PC-3 (cell line): ENCODE measurements at regions of chr3 and their contacts with region 1.

Region 1: DNA sequence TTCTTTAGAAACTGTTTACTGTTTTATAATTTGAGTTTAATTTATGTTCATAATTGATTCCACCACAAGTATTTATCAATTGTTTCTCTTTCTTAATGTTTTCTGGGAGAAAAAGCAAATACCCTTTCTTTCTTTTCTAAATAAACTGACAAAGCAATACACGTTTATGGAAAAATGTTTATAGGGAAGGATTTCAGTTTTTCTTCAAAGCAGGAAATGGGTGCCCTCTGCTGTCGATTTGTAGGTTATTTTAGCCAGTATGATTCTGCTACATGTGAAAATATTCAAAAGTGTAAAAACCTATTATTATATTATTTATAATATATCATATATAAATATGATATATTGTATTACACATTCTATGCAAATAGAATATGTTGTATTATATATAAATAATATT is 921.0 kb upstream of the ROBO1 start:
- DNase-seq: peak; percentile 57
- ATAC-seq: peak; percentile 57
- H3K4me3 ChIP-seq: no peak overlapping the region
- H3K27ac ChIP-seq: no peak overlapping the region
- H3K4me1 ChIP-seq: no peaks in the 10 kb centered on the region
- H3K27me3 ChIP-seq: no peaks in the 10 kb centered on the region
- CTCF ChIP-seq: peak; percentile 55

Region 2: DNA sequence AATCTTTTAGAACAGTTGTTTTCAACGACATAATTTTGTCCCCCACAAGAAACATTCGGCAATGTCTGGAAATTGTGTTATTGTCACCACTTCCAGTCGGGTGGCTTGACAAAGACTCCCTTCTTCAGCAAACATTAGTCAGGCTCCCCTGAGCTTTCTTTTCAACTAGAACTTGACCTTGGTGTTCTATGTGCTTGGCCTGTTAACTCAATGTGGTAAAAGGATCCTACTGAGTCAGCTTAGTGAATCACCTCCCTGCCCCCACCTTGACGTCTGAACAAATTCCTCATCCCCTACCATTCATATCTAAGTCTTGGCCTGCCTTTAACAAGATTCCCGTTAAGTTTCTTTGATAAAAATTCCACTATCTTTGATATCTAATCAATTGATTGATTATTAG is 456.1 kb before region 1 on chr3:
- CTCF ChIA-PET with region 1: no interaction called
- POLR2A ChIA-PET with region 1: no interaction called
- intact Hi-C with region 1: loop called (anchors 5 kb)
- DNase-seq: peak; percentile 95
- ATAC-seq: peak; percentile 96
- H3K4me3 ChIP-seq: peak overlapping the region; percentile 58
- H3K27ac ChIP-seq: peak overlapping the region; percentile 84
- H3K4me1 ChIP-seq: peaks cover 30% of the 10 kb centered on the region
- H3K27me3 ChIP-seq: no peaks in the 10 kb centered on the region
- CTCF ChIP-seq: no peak

Region 3: GRCh38 chr3:80643428-80643827 is 45.4 kb before region 1 on chr3:
- CTCF ChIA-PET with region 1: no interaction called
- POLR2A ChIA-PET with region 1: no interaction called
- intact Hi-C with region 1: no loop called
- DNase-seq: no peak
- ATAC-seq: no peak
- H3K4me3 ChIP-seq: no peak overlapping the region
- H3K27ac ChIP-seq: no peak overlapping the region
- H3K4me1 ChIP-seq: no peaks in the 10 kb centered on the region
- H3K27me3 ChIP-seq: no peaks in the 10 kb centered on the region
- CTCF ChIP-seq: no peak

Region 4: GRCh38 chr3:81326245-81326644 is 637.4 kb after region 1 on chr3:
- CTCF ChIA-PET with region 1: no interaction called
- POLR2A ChIA-PET with region 1: no interaction called
- intact Hi-C with region 1: no loop called
- DNase-seq: no peak
- ATAC-seq: no peak
- H3K4me3 ChIP-seq: no peak overlapping the region
- H3K27ac ChIP-seq: no peak overlapping the region
- H3K4me1 ChIP-seq: no peaks in the 10 kb centered on the region
- H3K27me3 ChIP-seq: no peaks in the 10 kb centered on the region
- CTCF ChIP-seq: no peak